ENCODE measurements at regions of chr12 and their contacts with region 1.

Region 1: GRCh38 chr12:99386907-99387306 is 260.6 kb upstream of the GARIN6 start:
- DNase-seq: peak in 1 of 2 experiments; percentile 34
- H3K4me3 ChIP-seq: no peak overlapping the region
- H3K4me3 Mint-ChIP-seq: no peak overlapping the region
- H3K27ac Mint-ChIP-seq: no peak overlapping the region
- H3K4me1 ChIP-seq: no peaks in the 10 kb centered on the region
- H3K4me1 Mint-ChIP-seq: no peaks in the 10 kb centered on the region
- H3K27me3 ChIP-seq: no peaks in the 10 kb centered on the region
- H3K27me3 Mint-ChIP-seq: no peaks in the 10 kb centered on the region
- CTCF ChIP-seq: peak; percentile 59 to 72

Region 2: GRCh38 chr12:99043319-99043914 is 343.5 kb before region 1 on chr12:
- CTCF ChIA-PET with region 1: no interaction called
- POLR2A ChIA-PET with region 1: no interaction called
- intact Hi-C with region 1: loop called (anchors 1 kb)
- DNase-seq: peak; percentile 53 to 66
- H3K4me3 ChIP-seq: no peak overlapping the region
- H3K4me3 Mint-ChIP-seq: no peak overlapping the region
- H3K27ac Mint-ChIP-seq: no peak overlapping the region
- H3K4me1 ChIP-seq: no peaks in the 10 kb centered on the region
- H3K4me1 Mint-ChIP-seq: no peaks in the 10 kb centered on the region
- H3K27me3 ChIP-seq: no peaks in the 10 kb centered on the region
- H3K27me3 Mint-ChIP-seq: peaks cover 11% of the 10 kb centered on the region
- CTCF ChIP-seq: peak; percentile 86 to 89

Region 3: GRCh38 chr12:99370421-99371138 is 16.3 kb before region 1 on chr12:
- CTCF ChIA-PET with region 1: no interaction called
- POLR2A ChIA-PET with region 1: no interaction called
- intact Hi-C with region 1: no loop called
- DNase-seq: no peak
- H3K4me3 ChIP-seq: no peak overlapping the region
- H3K4me3 Mint-ChIP-seq: no peak overlapping the region
- H3K27ac Mint-ChIP-seq: no peak overlapping the region
- H3K4me1 ChIP-seq: no peaks in the 10 kb centered on the region
- H3K4me1 Mint-ChIP-seq: no peaks in the 10 kb centered on the region
- H3K27me3 ChIP-seq: no peaks in the 10 kb centered on the region
- H3K27me3 Mint-ChIP-seq: peaks cover 1% of the 10 kb centered on the region
- CTCF ChIP-seq: no peak

Region 4: DNA sequence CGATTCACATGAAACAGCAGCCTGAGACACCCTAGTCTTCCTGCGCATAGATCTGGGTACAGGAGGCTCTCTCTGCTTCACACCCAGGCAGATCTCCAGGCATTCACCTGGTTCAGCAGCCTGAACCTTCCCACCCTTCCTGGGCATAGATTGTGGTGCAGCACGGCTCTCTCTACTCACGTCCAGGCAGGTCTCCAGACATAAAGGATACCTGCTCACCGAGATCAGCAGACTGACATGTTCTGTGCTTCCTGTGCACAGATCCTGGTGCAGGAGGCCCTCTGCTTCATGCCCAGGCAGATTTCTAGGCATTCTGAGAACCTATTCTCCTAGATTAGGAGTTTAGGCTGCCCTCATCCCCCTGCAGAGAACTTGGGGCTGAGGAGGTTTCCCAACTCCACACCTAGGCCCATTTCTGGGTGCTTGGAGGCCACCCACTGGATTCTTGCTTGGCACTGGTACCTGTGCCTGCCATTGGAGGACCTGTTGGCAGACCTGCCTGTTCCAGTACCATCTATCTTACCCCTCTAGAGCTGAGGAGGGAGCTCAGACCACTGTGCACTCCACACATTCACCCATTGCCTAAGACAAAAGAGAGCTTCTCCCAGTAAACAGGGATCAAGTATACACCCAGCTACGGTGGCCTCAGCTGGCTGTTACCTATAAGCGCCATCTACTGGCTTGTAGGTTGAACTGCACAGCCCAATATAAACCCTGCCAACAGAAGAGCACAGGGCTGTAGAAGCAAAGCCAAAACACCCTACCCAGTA is 232.7 kb after region 1 on chr12:
- CTCF ChIA-PET with region 1: interaction called, 8 read pairs
- POLR2A ChIA-PET with region 1: no interaction called
- intact Hi-C with region 1: loop called (anchors 1 kb)
- DNase-seq: peak in 1 of 2 experiments; percentile 21
- H3K4me3 ChIP-seq: no peak overlapping the region
- H3K4me3 Mint-ChIP-seq: no peak overlapping the region
- H3K27ac Mint-ChIP-seq: no peak overlapping the region
- H3K4me1 ChIP-seq: no peaks in the 10 kb centered on the region
- H3K4me1 Mint-ChIP-seq: no peaks in the 10 kb centered on the region
- H3K27me3 ChIP-seq: no peaks in the 10 kb centered on the region
- H3K27me3 Mint-ChIP-seq: no peaks in the 10 kb centered on the region
- CTCF ChIP-seq: peak; percentile 48 to 61

Region 5: DNA sequence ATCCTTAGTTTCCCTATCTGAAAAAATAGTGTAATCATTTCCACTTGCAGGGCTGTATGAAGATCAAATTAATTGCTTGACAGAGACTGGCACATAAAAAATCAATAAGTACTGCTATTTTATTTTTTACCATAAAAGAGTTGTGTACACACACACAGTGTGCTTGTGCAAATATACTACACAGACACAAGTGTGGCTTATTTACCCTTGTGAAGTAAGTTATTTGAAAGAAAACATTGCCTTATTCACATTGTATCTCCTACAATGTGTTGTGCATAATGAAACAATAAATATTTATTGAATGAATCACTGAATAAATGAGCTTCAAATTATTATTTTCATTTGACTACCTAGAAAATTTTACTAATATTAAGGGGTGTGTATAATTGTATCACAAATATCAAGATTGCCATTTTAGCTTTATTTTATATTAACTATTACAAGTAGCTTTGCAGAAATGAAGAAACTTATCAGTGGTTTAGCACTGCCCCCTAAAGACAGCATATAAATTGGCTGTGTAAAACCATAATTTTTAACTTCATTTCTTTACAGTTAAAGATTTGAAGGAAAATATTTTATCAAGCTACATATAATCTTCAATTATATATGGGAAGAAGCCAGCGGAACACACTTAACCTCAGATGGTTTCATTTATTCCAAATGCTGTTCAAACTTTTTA is 271.9 kb after region 1 on chr12:
- CTCF ChIA-PET with region 1: interaction called, 7 read pairs
- POLR2A ChIA-PET with region 1: no interaction called
- intact Hi-C with region 1: loop called (anchors 1 kb)
- DNase-seq: no peak
- H3K4me3 ChIP-seq: no peak overlapping the region
- H3K4me3 Mint-ChIP-seq: no peak overlapping the region
- H3K27ac Mint-ChIP-seq: no peak overlapping the region
- H3K4me1 ChIP-seq: no peaks in the 10 kb centered on the region
- H3K4me1 Mint-ChIP-seq: no peaks in the 10 kb centered on the region
- H3K27me3 ChIP-seq: no peaks in the 10 kb centered on the region
- H3K27me3 Mint-ChIP-seq: peaks cover 5% of the 10 kb centered on the region
- CTCF ChIP-seq: peak; percentile 5 to 16

Region 6: DNA sequence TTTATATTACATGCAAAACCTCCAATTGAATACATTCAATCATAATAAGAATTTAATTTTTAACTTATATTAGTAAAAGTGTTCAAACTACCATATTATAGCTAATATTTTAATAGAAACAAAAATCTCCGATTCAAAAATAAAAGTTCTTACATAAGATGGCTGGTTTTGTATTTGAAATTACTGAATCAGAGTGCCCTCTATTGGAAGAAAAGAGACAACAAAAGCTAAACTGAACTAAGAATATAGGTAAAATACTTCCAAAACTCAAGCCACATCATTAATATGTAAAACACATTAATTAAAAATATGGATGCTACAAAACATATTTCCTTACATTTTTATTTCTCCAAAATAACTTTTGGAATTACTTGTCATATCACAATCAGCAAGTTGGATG is 380.9 kb after region 1 on chr12:
- CTCF ChIA-PET with region 1: no interaction called
- POLR2A ChIA-PET with region 1: no interaction called
- intact Hi-C with region 1: loop called (anchors 1 kb)
- DNase-seq: no peak
- H3K4me3 ChIP-seq: no peak overlapping the region
- H3K4me3 Mint-ChIP-seq: no peak overlapping the region
- H3K27ac Mint-ChIP-seq: no peak overlapping the region
- H3K4me1 ChIP-seq: no peaks in the 10 kb centered on the region
- H3K4me1 Mint-ChIP-seq: no peaks in the 10 kb centered on the region
- H3K27me3 ChIP-seq: no peaks in the 10 kb centered on the region
- H3K27me3 Mint-ChIP-seq: peaks cover 8% of the 10 kb centered on the region
- CTCF ChIP-seq: peak; percentile 49 to 51

Region 7: DNA sequence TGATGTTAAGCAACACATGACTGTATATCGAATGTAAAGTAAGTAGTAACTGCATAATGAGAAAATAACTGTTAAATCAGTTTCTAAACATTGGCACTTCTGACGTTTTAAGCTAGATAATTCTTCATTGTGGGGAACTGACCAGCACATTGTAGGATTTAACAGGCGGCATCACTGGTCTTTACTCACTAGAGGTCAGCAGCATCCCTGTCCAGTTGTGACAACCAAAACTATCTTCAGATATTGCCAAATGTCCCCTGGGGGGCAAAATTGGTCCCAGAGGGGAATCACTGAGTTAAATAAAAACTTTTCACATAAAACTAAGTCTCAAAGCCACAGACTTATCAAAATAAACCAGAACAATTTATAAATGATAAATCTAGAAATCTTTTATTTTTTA is 690.5 kb after region 1 on chr12:
- CTCF ChIA-PET with region 1: no interaction called
- POLR2A ChIA-PET with region 1: no interaction called
- intact Hi-C with region 1: no loop called
- DNase-seq: peak in 1 of 2 experiments; percentile 11
- H3K4me3 ChIP-seq: no peak overlapping the region
- H3K4me3 Mint-ChIP-seq: no peak overlapping the region
- H3K27ac Mint-ChIP-seq: no peak overlapping the region
- H3K4me1 ChIP-seq: no peaks in the 10 kb centered on the region
- H3K4me1 Mint-ChIP-seq: no peaks in the 10 kb centered on the region
- H3K27me3 ChIP-seq: no peaks in the 10 kb centered on the region
- H3K27me3 Mint-ChIP-seq: no peaks in the 10 kb centered on the region
- CTCF ChIP-seq: peak in 1 of 2 experiments; percentile 19